ENCODE measurements at regions of chr9 and their contacts with region 1.

Region 1: GRCh38 chr9:115204904-115205453 is 87.0 kb upstream of the TNC start:
- DNase-seq: no peak
- H3K4me3 ChIP-seq: no peak overlapping the region
- H3K4me3 Mint-ChIP-seq: no peak overlapping the region
- H3K27ac Mint-ChIP-seq: no peak overlapping the region
- H3K4me1 ChIP-seq: peaks cover 14% of the 10 kb centered on the region; the same call in 1 of the 2 replicates
- H3K4me1 Mint-ChIP-seq: peaks cover 13% of the 10 kb centered on the region
- H3K27me3 ChIP-seq: no peaks in the 10 kb centered on the region
- H3K27me3 Mint-ChIP-seq: no peaks in the 10 kb centered on the region
- CTCF ChIP-seq: no peak

Region 2: DNA sequence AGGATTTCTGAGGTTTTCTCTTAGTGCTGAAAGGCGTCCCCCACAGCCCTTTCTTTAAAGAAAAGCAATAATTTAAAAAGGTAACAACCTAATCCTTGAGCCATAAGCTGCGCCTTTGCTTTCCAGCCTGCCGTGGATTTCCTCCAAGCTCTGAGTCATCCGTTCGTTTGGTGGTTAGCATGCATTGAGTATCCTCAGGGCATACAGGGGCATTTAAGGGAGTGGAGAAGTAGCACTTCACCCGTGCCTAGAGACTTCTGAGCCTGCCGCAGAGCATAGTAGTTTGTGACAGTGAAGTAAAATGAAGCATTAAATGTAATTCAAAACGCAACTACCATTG is 86.1 kb before region 1 on chr9:
- CTCF ChIA-PET with region 1: no interaction called
- POLR2A ChIA-PET with region 1: no interaction called
- intact Hi-C with region 1: no loop called
- DNase-seq: peak; percentile 11 to 56
- H3K4me3 ChIP-seq: no peak overlapping the region
- H3K4me3 Mint-ChIP-seq: peak overlapping the region; percentile 79
- H3K27ac Mint-ChIP-seq: no peak overlapping the region
- H3K4me1 ChIP-seq: no peaks in the 10 kb centered on the region
- H3K4me1 Mint-ChIP-seq: no peaks in the 10 kb centered on the region
- H3K27me3 ChIP-seq: no peaks in the 10 kb centered on the region; the same call in 1 of the 2 replicates
- H3K27me3 Mint-ChIP-seq: no peaks in the 10 kb centered on the region
- CTCF ChIP-seq: no peak

Region 3: GRCh38 chr9:115262477-115262876 is 57.5 kb after region 1 on chr9:
- CTCF ChIA-PET with region 1: no interaction called
- POLR2A ChIA-PET with region 1: no interaction called
- intact Hi-C with region 1: loop called (anchors 10 kb)
- DNase-seq: no peak
- H3K4me3 ChIP-seq: no peak overlapping the region
- H3K4me3 Mint-ChIP-seq: no peak overlapping the region
- H3K27ac Mint-ChIP-seq: no peak overlapping the region
- H3K4me1 ChIP-seq: no peaks in the 10 kb centered on the region
- H3K4me1 Mint-ChIP-seq: no peaks in the 10 kb centered on the region
- H3K27me3 ChIP-seq: no peaks in the 10 kb centered on the region
- H3K27me3 Mint-ChIP-seq: no peaks in the 10 kb centered on the region
- CTCF ChIP-seq: no peak